ENCODE measurements at regions of chr11 and their contacts with region 1.

Region 1: GRCh38 chr11:61803889-61804647 is 11.4 kb downstream of the FEN1 start:
- DNase-seq: no peak
- H3K4me3 ChIP-seq: no peak overlapping the region
- H3K27ac ChIP-seq: no peak overlapping the region
- H3K4me1 ChIP-seq: no peaks in the 10 kb centered on the region
- H3K27me3 ChIP-seq: no peaks in the 10 kb centered on the region
- CTCF ChIP-seq: no peak
- POLR2A ChIP-seq: no peak

Region 2: DNA sequence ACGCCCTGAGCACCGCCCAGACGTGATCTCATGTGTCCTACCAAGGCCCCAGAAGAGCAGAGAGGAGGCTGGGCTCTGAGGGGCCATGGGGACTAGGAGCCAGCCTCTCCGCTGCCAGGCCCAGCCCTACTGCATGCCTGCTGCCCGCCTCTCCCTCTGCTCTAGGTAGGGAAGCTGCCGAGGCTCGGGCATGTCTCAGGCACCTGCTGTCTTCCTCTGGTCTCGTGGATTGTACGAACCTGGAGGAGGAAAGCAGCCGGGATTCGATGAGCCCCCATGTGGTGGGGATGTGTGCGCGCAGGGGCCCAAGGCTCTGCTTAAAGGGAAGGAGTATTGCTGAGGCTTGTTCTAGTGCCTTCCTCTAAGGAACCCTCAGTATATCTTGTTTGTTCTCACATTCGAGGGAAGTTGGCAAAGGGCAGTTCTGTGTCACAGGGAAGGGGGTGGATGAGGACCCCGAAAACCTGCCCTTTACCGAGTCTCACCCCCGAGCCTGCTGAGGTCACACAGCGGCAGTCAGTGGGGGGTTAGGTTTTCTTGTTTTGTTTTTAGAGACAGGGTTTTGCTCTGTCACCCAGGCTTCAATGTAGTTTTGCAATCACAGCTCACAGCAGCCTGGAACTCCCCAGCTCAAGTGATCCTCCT is 102.7 kb before region 1 on chr11:
- intact Hi-C with region 1: no loop called
- DNase-seq: no peak
- H3K4me3 ChIP-seq: no peak overlapping the region
- H3K27ac ChIP-seq: no peak overlapping the region
- H3K4me1 ChIP-seq: peaks cover 0 to 12% of the 10 kb centered on the region in 2 donors
- H3K27me3 ChIP-seq: no peaks in the 10 kb centered on the region
- CTCF ChIP-seq: no peak
- POLR2A ChIP-seq: no peak

Region 3: DNA sequence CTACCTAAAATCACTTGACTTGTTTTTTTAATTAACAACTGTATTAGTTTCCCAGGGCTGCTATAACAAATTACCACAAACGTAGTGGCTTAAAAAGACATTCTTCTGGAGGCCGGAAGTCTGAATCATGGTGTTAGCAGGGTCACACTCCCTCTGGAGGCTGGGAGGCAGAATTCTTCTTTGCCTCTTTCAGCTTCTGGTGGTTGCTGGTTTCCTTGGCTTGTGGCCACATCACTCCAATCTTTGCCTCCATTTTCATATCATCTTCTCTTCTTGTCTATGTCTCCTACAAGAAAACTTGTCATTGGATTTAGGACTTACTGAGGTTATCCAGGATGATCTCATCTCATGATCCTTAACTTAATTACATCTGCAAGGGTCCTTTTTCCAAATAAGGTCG is 312.4 kb after region 1 on chr11:
- intact Hi-C with region 1: loop called (anchors 10 kb)
- DNase-seq: no peak
- H3K4me3 ChIP-seq: no peak overlapping the region
- H3K27ac ChIP-seq: no peak overlapping the region
- H3K4me1 ChIP-seq: peaks cover 0 to 4% of the 10 kb centered on the region in 2 donors
- H3K27me3 ChIP-seq: no peaks in the 10 kb centered on the region
- CTCF ChIP-seq: no peak
- POLR2A ChIP-seq: no peak

Measured in uterus (tissue), 4 donors.